ENCODE measurements at regions of chr11 and their contacts with region 1.

Region 1: GRCh38 chr11:66408488-66409214 is 12.2 kb upstream of the NPAS4 start:
- DNase-seq: peak; percentile 82 to 86 (median 85)
- H3K4me3 ChIP-seq: peak overlapping the region in 1 of 3 experiments; percentile 64
- H3K4me3 Mint-ChIP-seq: peak overlapping the region; percentile 47 to 71
- H3K27ac ChIP-seq: no peak overlapping the region
- H3K27ac Mint-ChIP-seq: no peak overlapping the region
- H3K4me1 ChIP-seq: peaks cover 7 to 12% of the 10 kb centered on the region in 2 donors
- H3K4me1 Mint-ChIP-seq: peaks cover 4% of the 10 kb centered on the region
- H3K27me3 ChIP-seq: peaks cover 3 to 14% of the 10 kb centered on the region in 2 donors
- H3K27me3 Mint-ChIP-seq: peaks cover 17 to 39% (median 30%) of the 10 kb centered on the region in 3 donors
- CTCF ChIP-seq: peak; percentile 100

Region 2: DNA sequence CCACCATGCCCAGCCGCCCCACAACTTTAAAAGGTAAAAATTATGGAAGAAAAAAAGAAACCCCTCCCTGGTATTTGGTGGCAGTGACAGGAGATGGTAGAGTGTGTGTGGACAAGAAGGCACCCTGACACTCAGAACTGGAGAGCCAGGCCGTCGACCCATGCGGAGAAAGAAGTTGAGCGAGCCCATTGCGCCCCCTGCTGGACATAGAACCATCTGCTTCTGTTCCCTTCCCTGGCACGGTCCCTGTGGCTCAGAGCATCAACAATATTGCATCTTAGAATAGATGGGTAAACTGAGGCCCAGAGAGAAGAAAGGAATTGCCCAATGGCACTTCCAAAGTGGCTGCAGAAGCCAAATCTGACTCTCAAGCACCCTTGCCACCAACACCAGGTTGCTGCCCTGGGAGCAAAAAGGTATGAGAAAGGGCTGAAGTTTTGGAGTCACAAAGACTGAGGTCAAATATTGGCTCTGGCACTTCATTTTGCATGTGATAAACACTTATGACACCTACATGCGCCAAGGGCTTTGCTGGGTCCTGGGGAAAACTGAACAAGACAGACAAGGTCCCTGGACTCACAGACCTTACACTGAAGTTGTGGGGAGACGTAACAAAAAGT is 21.4 kb after region 1 on chr11:
- intact Hi-C with region 1: loop called in 1 of 2 experiments (anchors 1 kb)
- DNase-seq: peak; percentile 60 to 71 (median 70)
- H3K4me3 ChIP-seq: no peak overlapping the region
- H3K4me3 Mint-ChIP-seq: no peak overlapping the region
- H3K27ac ChIP-seq: no peak overlapping the region
- H3K27ac Mint-ChIP-seq: peak overlapping the region in 1 of 7 donors; percentile 10
- H3K4me1 ChIP-seq: peaks cover 8 to 11% of the 10 kb centered on the region in 2 donors
- H3K4me1 Mint-ChIP-seq: peaks cover 8% of the 10 kb centered on the region
- H3K27me3 ChIP-seq: peaks cover 0 to 2% of the 10 kb centered on the region in 2 donors
- H3K27me3 Mint-ChIP-seq: peaks cover 0 to 3% (median 3%) of the 10 kb centered on the region in 3 donors
- CTCF ChIP-seq: peak; percentile 91

Region 3: GRCh38 chr11:66480117-66480938 is 71.7 kb after region 1 on chr11 and contains the start of gene DPP3:
- intact Hi-C with region 1: loop called (anchors 2 kb)
- DNase-seq: peak; percentile 96 to 98 (median 96)
- H3K4me3 ChIP-seq: peak within 1 kb of the TSS; percentile 51 to 87 (median 77)
- H3K4me3 Mint-ChIP-seq: peak within 1 kb of the TSS; percentile 85 to 89
- H3K27ac ChIP-seq: peak within 1 kb of the TSS; percentile 82 to 96
- H3K27ac Mint-ChIP-seq: peak within 1 kb of the TSS; percentile 90 to 96 (median 92)
- H3K4me1 ChIP-seq: peaks cover 19 to 24% of the 10 kb centered on the region in 2 donors
- H3K4me1 Mint-ChIP-seq: peaks cover 18% of the 10 kb centered on the region
- H3K27me3 ChIP-seq: no peaks in the 10 kb centered on the region
- H3K27me3 Mint-ChIP-seq: peaks cover 0 to 5% (median 0%) of the 10 kb centered on the region in 3 donors
- CTCF ChIP-seq: no peak
- polyA plus RNA-seq, gene DPP3: 22.4 to 37.0 (median 26.7) TPM

Region 4: DNA sequence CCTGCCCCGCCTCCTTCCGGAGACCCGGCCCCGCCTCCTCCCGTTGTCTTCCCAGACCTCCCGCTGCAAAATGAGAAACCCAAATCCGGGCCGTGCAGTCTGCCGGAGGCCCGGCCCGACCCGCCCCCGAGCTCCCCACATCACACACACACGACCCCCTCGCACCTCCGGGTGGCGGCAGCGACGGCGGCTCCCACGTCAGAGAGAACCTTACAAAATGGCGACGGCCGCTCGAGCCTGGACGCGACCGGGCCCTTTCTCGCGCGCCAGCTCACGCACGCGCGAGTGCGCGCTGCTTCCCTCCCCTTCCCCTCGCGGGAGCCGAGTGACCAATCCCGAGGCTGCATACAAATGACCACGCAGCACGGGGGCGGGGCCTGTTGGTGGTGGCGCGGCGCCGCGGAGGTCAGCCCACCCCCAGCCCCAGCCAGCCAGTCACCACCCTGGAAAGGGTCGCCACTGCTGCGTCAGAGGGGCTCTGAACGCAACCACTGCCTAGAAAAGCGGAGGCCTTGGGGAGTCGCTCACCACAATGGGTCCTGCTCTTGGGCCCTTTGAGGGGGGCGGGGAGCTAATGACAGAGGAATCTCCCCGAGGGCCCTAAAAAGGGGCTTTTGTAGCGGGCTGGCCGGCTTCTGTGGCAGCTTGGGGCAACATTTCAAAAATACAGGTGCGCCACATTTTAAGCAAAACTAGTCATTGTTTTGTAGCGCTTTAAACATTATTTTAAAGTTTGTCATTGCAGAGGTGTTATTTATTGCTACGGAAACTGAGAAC is 269.1 kb after region 1 on chr11 and contains the start of gene RBM4B:
- intact Hi-C with region 1: loop called (anchors 2 kb)
- DNase-seq: peak; percentile 93 to 97 (median 95)
- H3K4me3 ChIP-seq: peak within 1 kb of the TSS; percentile 74 to 85 (median 79)
- H3K4me3 Mint-ChIP-seq: peak within 1 kb of the TSS; percentile 89 to 95
- H3K27ac ChIP-seq: peak within 1 kb of the TSS; percentile 85 to 93
- H3K27ac Mint-ChIP-seq: peak within 1 kb of the TSS; percentile 95 to 98 (median 97)
- H3K4me1 ChIP-seq: peaks cover 18 to 26% of the 10 kb centered on the region in 2 donors
- H3K4me1 Mint-ChIP-seq: peaks cover 27% of the 10 kb centered on the region
- H3K27me3 ChIP-seq: no peaks in the 10 kb centered on the region
- H3K27me3 Mint-ChIP-seq: peaks cover 0 to 3% (median 0%) of the 10 kb centered on the region in 3 donors
- CTCF ChIP-seq: no peak
- polyA plus RNA-seq, gene RBM4B: 7.8 to 14.3 (median 11.2) TPM

Region 5: DNA sequence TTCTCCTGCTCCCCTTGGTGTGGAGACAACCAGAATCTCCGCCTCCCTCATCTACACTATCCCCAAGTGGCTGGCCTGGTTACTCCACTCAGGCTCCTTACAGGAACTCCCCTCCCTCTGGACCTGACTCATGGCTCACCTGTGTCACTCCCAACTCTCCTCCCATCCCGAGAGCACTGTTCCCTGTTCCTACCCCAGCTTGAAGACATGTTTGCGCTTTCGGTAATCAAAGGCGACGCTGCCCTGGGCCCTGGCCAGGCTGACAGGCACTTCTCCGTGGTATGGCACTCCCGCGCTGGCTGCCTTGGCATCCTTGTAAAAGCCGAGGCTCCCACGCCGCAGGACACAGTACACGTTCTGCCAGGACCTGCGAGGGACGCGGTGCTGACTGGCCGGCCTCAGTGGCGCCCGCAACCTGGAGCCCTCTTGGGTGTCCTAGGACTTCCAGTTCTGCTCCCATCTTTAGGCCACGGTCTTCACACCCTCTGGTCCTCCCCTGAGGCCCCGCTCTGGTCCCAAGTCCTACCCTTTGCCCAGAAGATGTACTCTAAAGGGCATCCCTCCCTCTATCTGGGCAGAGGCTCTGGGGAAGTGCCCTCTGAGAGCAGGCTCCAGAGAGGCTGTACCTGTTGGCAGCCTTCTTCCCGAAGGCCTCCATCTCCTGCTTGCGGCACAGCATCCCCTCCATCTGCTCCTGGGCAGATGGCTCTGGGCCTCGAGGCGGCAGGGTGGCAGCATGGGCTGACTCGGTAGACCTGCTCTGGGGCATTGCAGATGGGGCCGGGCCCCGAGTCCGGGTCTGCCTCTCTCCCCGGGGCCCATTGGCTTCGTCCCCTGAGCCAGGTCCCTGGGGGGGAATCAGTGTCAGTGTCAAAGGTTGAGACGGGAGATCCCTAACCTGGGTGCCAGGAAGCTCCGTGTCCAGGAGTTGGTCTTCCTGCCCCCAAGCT is 278.4 kb after region 1 on chr11:
- intact Hi-C with region 1: loop called in 1 of 2 experiments (anchors 5 kb)
- DNase-seq: no peak
- H3K4me3 ChIP-seq: no peak overlapping the region
- H3K4me3 Mint-ChIP-seq: no peak overlapping the region
- H3K27ac ChIP-seq: no peak overlapping the region
- H3K27ac Mint-ChIP-seq: peak overlapping the region in 2 of 7 donors; percentile 3 to 66
- H3K4me1 ChIP-seq: no peaks in the 10 kb centered on the region
- H3K4me1 Mint-ChIP-seq: no peaks in the 10 kb centered on the region
- H3K27me3 ChIP-seq: no peaks in the 10 kb centered on the region
- H3K27me3 Mint-ChIP-seq: peaks cover 0 to 3% (median 0%) of the 10 kb centered on the region in 3 donors
- CTCF ChIP-seq: no peak

Region 6: DNA sequence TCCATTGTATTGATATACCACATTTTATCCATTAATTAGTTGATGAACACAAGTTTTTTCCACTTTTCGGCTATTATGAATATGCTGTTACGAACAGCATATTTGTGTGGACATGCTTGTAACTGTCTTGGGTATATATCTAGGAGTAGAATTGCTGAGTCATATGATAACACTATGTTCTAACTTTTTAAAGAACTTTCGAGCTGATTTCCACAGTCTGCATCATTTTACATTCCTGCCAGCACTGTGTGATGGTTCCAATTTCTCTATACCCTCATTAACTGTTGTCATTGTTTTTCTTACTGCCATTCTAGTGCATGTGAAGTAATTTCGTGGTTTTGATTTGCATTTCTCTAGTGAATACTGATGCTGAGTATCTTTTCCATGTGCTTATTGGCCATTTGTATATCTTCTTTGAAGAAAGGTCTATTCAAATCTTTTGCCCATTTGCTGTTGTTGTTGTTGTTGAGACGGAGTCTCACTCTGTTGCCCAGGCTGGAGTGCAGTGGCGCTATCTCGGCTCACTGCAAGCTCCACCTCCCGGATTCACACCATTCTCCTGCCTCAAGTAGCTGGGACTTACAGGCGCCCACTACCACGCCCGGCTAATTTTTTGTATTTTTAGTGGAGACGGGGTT is 427.2 kb after region 1 on chr11:
- intact Hi-C with region 1: loop called (anchors 5 to 10 kb)
- DNase-seq: no peak
- H3K4me3 ChIP-seq: no peak overlapping the region
- H3K4me3 Mint-ChIP-seq: no peak overlapping the region
- H3K27ac ChIP-seq: no peak overlapping the region
- H3K27ac Mint-ChIP-seq: peak overlapping the region in 2 of 7 donors; percentile 30 to 66
- H3K4me1 ChIP-seq: no peaks in the 10 kb centered on the region
- H3K4me1 Mint-ChIP-seq: peaks cover 14% of the 10 kb centered on the region
- H3K27me3 ChIP-seq: no peaks in the 10 kb centered on the region
- H3K27me3 Mint-ChIP-seq: peaks cover 0 to 4% (median 0%) of the 10 kb centered on the region in 3 donors
- CTCF ChIP-seq: no peak

Measured in CD14-positive monocyte (primary cell).